ENCODE measurements at regions of chr11 and their contacts with region 1.

Region 1: DNA sequence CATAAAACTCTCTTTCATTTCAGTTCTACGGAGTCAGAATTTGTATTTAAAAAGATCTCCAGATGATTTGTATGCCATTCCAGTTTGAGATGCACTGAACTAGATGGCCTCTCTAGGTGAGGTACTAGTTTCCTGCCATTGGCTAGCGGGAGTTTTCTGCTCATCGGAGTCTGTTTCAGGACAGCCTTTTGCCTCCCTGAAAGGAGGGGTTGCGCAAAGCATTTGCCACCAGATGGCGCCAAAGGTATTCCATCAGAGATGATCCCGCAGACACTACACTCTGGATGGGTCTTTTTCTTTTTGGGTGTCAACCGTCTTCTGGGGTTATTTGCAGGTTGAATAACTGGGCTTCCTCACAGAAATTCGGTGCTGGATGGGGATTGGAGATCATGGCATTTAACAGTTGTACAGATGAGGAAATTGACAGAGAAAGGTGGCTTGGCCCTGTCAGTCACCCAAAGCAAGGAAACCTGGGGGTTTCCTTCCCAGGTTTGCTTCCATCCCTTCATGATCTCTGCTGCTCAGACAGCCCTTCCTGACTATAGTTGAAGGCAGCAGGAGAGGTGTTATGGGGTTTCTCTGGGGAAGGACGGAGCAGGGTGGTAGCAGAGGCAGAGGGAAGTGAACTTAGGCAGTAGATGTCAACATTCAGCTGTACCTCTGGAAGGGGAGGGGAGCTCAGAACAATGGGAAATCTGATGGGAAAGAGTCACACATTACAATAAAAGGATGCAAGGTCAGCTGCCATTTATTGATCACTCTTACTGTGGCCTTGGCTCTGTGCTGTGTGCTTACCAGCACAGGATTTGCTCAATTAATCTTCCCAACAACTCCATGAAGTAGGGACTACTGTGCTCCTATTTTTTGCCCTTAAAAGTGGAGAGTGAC is 81.6 kb downstream of the CCDC81 start:
- DNase-seq: peak; percentile 64
- H3K4me3 ChIP-seq: no peak overlapping the region
- H3K27ac ChIP-seq: no peak overlapping the region
- H3K4me1 ChIP-seq: peaks cover 32% of the 10 kb centered on the region
- H3K27me3 ChIP-seq: no peaks in the 10 kb centered on the region
- CTCF ChIP-seq: peak; percentile 85 to 90

Region 2: GRCh38 chr11:86370922-86371594 is 85.2 kb before region 1 on chr11:
- CTCF ChIA-PET with region 1: no interaction called
- dilution Hi-C with region 1: no loop called
- in situ Hi-C with region 1: no loop called
- intact Hi-C with region 1: no loop called
- DNase-seq: peak; percentile 83
- H3K4me3 ChIP-seq: no peak overlapping the region
- H3K27ac ChIP-seq: peak overlapping the region; percentile 20
- H3K4me1 ChIP-seq: peaks cover 30% of the 10 kb centered on the region
- H3K27me3 ChIP-seq: no peaks in the 10 kb centered on the region
- CTCF ChIP-seq: no peak

Region 3: DNA sequence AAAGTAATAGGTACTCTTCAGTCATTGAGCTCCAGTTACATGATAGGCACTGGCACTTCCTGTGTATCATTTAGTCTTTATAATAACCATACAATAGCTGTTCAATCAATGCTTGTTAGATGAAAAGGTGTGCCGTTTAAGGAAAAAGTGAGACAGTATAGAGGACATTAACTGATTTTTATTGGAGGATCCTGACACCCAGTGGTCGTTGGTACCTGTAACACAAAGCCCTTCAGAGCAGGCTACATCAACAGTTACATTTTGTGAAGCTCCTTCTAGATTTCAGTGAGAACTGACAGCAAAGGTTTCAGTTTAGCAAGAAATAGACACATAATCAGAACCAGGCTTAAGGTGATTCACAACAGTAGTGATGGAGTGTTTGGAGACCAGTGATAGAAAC is 37.4 kb before region 1 on chr11:
- CTCF ChIA-PET with region 1: no interaction called
- dilution Hi-C with region 1: no loop called
- in situ Hi-C with region 1: no loop called
- intact Hi-C with region 1: no loop called
- DNase-seq: peak; percentile 27
- H3K4me3 ChIP-seq: no peak overlapping the region
- H3K27ac ChIP-seq: no peak overlapping the region
- H3K4me1 ChIP-seq: peaks cover 4% of the 10 kb centered on the region
- H3K27me3 ChIP-seq: no peaks in the 10 kb centered on the region
- CTCF ChIP-seq: peak; percentile 20 to 51

Region 4: GRCh38 chr11:86523738-86524619 is 67.7 kb after region 1 on chr11:
- CTCF ChIA-PET with region 1: no interaction called
- dilution Hi-C with region 1: no loop called
- in situ Hi-C with region 1: no loop called
- intact Hi-C with region 1: loop called (anchors 1 kb)
- DNase-seq: peak; percentile 87
- H3K4me3 ChIP-seq: no peak overlapping the region
- H3K27ac ChIP-seq: peak overlapping the region; percentile 77
- H3K4me1 ChIP-seq: peaks cover 22% of the 10 kb centered on the region
- H3K27me3 ChIP-seq: no peaks in the 10 kb centered on the region
- CTCF ChIP-seq: no peak

Region 5: GRCh38 chr11:86620891-86621521 is 164.7 kb after region 1 on chr11:
- CTCF ChIA-PET with region 1: no interaction called
- dilution Hi-C with region 1: no loop called
- in situ Hi-C with region 1: loop called in 1 of 2 experiments (anchors 25 kb)
- intact Hi-C with region 1: loop called (anchors 5 kb)
- DNase-seq: no peak
- H3K4me3 ChIP-seq: no peak overlapping the region
- H3K27ac ChIP-seq: no peak overlapping the region
- H3K4me1 ChIP-seq: peaks cover 14% of the 10 kb centered on the region
- H3K27me3 ChIP-seq: no peaks in the 10 kb centered on the region
- CTCF ChIP-seq: no peak

Region 6: GRCh38 chr11:86740709-86741483 is 284.6 kb after region 1 on chr11:
- CTCF ChIA-PET with region 1: no interaction called
- dilution Hi-C with region 1: no loop called
- in situ Hi-C with region 1: loop called in 1 of 2 experiments (anchors 10 kb)
- intact Hi-C with region 1: loop called (anchors 2 kb)
- DNase-seq: peak; percentile 88
- H3K4me3 ChIP-seq: no peak overlapping the region
- H3K27ac ChIP-seq: peak overlapping the region; percentile 85
- H3K4me1 ChIP-seq: peaks cover 65% of the 10 kb centered on the region
- H3K27me3 ChIP-seq: no peaks in the 10 kb centered on the region
- CTCF ChIP-seq: no peak

Region 7: GRCh38 chr11:86869966-86870570 is 413.8 kb after region 1 on chr11:
- CTCF ChIA-PET with region 1: no interaction called
- dilution Hi-C with region 1: no loop called
- in situ Hi-C with region 1: no loop called
- intact Hi-C with region 1: loop called (anchors 1 kb)
- DNase-seq: peak; percentile 19
- H3K4me3 ChIP-seq: no peak overlapping the region
- H3K27ac ChIP-seq: no peak overlapping the region
- H3K4me1 ChIP-seq: peaks cover 6% of the 10 kb centered on the region
- H3K27me3 ChIP-seq: no peaks in the 10 kb centered on the region
- CTCF ChIP-seq: peak; percentile 83 to 86

Measured in mammary epithelial cell (primary cell).